A549 (cell line): ENCODE measurements at regions of chr22 and their contacts with region 1.

Region 1: DNA sequence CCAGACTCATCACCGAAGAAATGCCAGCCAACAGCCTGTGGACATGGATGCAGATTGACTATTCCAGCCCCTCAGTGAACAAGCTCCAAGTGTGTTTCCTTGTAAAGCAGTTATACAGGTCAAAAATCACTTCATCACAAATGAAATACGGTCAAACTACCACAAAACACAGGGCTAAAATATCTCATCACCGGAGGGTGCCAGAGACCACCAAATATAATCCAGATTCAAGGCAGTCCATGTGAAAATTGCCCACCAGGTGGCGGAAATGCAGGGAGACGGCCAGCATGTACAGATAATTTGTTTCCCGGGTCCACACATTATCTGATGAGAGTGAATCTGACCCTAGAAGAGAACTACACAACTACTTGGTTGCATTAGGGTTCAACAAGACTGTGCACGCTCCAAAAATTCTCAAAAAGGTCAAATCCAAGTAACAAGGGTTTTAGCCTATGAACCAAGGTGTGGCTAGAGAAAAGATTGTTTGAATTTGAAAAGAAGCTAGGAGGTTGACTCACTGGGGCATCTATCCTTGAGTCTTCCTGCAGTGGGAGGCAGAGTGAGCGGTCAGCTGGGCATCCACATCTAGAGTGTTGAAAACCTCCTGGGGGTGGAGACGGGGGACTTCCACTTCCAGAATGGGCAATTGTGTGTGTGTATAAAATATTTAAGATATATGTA is 71.7 kb downstream of the IGLL5 start:
- DNase-seq: peak; percentile 40 to 66
- ATAC-seq: peak; percentile 71 to 84
- H3K4me3 ChIP-seq: no peak overlapping the region
- H3K27ac ChIP-seq: no peak overlapping the region
- H3K4me1 ChIP-seq: no peaks in the 10 kb centered on the region
- CTCF ChIP-seq: peak; percentile 93
- EP300 ChIP-seq: no peak
- POLR2A ChIP-seq: no peak
- RAD21 ChIP-seq: peak; percentile 90

Region 2: GRCh38 chr22:22431271-22432220 is 527.7 kb before region 1 on chr22:
- CTCF ChIA-PET with region 1: interaction called, 22 read pairs
- POLR2A ChIA-PET with region 1: no interaction called
- DNase-seq: peak; percentile 48 to 53
- ATAC-seq: peak; percentile 97 to 99
- H3K4me3 ChIP-seq: no peak overlapping the region
- H3K27ac ChIP-seq: no peak overlapping the region
- H3K4me1 ChIP-seq: no peaks in the 10 kb centered on the region
- CTCF ChIP-seq: peak; percentile 55
- EP300 ChIP-seq: no peak
- POLR2A ChIP-seq: no peak
- RAD21 ChIP-seq: peak; percentile 45 to 50

Region 3: DNA sequence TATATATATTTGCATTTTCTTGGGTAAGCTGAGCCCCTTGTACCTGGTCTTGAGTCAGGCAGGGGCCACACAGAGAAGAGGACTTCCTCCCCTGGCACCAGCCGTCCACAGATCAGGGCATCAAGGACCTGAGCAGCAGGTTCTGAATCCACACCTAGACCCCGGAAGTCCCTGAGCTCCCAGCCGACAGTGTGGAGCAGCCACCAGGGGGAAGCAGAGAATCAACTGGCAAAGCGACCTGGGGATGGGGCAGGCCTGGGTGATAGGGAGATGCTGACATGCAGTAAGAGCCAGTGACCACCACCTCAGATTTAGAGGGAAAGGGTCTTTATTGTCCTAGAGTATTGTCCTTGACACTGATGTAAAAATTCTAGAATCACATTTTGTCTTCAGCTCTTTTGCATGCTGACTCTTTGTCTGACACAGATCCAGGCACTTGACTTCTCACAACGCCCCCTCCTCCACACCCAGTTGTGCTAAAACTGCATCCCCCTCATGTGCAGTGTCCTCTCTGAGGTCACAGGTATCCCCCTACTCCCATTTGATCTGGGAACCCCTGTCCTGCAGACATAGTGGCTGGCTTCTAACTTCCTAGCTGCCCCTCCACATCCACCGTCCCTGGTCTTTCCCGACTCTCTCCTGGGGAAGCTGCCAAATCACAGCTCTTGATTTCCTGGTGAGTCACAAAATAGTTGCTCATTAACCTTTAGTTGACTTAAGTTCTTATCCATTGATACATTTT is 205.6 kb before region 1 on chr22:
- CTCF ChIA-PET with region 1: interaction called, 14 read pairs
- POLR2A ChIA-PET with region 1: no interaction called
- DNase-seq: peak; percentile 54 to 74
- ATAC-seq: peak; percentile 89 to 97
- H3K4me3 ChIP-seq: no peak overlapping the region
- H3K27ac ChIP-seq: 0 out of 6 replicates have a peak overlapping the region, but pooled peaks of 1 of the 2 experiments have one; percentile 39
- H3K4me1 ChIP-seq: peaks cover 5% of the 10 kb centered on the region; the same call in 1 of the 3 replicates
- CTCF ChIP-seq: peak; percentile 43; the same call in 2 of the 3 replicates
- EP300 ChIP-seq: no peak
- POLR2A ChIP-seq: no peak
- RAD21 ChIP-seq: peak; percentile 36 to 46; a peak in 3 of 5 replicates

Region 4: DNA sequence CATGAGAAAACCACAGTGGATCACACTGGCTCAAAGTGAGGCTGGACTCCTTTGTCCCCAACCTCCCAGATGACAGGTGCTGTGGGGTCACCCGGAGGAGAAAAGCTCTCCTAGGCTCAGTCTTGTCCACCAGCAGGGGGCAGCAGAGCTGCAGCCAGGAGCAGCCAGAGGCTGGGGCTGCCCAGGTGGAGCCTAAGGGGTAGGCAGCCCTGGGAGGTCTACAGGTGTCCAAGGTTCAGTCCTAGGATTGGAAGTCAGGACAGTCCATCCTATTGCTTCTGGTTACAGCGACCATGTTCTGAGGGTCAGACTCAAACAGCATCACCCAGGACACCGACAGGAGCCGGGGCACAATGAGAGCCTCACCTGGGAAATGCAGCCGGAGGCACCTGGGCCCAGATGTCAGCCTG is 149.3 kb before region 1 on chr22:
- CTCF ChIA-PET with region 1: interaction called, 13 read pairs
- POLR2A ChIA-PET with region 1: no interaction called
- DNase-seq: peak; percentile 18 to 46
- ATAC-seq: peak; percentile 85 to 93; a peak in 5 of 6 replicates
- H3K4me3 ChIP-seq: no peak overlapping the region
- H3K27ac ChIP-seq: no peak overlapping the region
- H3K4me1 ChIP-seq: no peaks in the 10 kb centered on the region
- CTCF ChIP-seq: peak; percentile 58
- EP300 ChIP-seq: no peak
- POLR2A ChIP-seq: no peak
- RAD21 ChIP-seq: peak; percentile 45 to 51

Region 5: GRCh38 chr22:22942511-22943329 is 16.6 kb before region 1 on chr22:
- CTCF ChIA-PET with region 1: interaction called, 28 read pairs
- POLR2A ChIA-PET with region 1: no interaction called
- DNase-seq: peak; percentile 35 to 65
- ATAC-seq: peak; percentile 74 to 94
- H3K4me3 ChIP-seq: no peak overlapping the region
- H3K27ac ChIP-seq: no peak overlapping the region
- H3K4me1 ChIP-seq: no peaks in the 10 kb centered on the region
- CTCF ChIP-seq: peak; percentile 44
- EP300 ChIP-seq: no peak
- POLR2A ChIP-seq: no peak
- RAD21 ChIP-seq: peak in 1 of 2 experiments; percentile 43; a peak in 2 of 5 replicates

Region 6: DNA sequence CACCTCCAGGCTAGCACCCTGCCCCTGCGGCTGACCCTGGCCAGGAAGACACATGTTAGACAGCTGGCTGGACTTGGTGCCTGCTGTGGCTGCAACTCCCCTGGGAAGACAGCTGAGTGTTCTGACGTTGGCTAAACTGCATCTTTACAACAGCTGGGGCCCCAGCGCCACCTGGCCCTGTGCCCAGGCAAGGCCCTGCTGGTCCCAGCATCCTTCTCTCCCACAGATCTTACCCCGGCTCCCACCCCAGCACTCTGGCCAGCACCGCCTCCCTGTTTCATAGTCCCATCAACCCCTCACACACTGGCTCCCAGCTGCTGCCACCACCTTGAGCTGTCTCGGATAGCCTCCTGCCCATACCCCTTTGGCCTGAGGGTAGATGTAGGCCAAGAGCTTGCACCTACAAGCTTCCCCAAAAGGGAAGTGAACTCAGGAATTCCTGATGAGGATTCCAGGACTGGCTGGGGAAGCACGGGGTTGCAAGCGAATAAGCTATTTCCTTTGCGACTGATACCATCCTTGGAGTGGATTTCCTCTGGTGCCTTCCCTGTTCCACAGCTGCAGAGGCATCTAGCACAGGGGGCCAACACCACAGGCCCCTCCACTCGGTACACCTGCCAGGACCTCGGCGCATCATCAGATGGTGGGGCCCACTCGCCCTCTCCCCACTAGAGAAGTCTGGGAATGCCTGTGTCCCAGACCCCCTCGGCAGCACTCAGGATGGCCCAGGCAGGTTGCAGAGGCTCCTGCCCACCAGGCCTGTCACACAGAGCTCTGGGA is 154.0 kb after region 1 on chr22:
- CTCF ChIA-PET with region 1: interaction called, 144 read pairs
- POLR2A ChIA-PET with region 1: no interaction called
- DNase-seq: no peak
- ATAC-seq: no peak
- H3K4me3 ChIP-seq: no peak overlapping the region
- H3K27ac ChIP-seq: no peak overlapping the region
- H3K4me1 ChIP-seq: no peaks in the 10 kb centered on the region
- CTCF ChIP-seq: no peak
- EP300 ChIP-seq: no peak
- POLR2A ChIP-seq: no peak
- RAD21 ChIP-seq: no peak

Region 7: GRCh38 chr22:23137905-23138561 is 178.7 kb after region 1 on chr22:
- CTCF ChIA-PET with region 1: interaction called, 314 read pairs
- POLR2A ChIA-PET with region 1: no interaction called
- DNase-seq: no peak
- ATAC-seq: no peak
- H3K4me3 ChIP-seq: no peak overlapping the region
- H3K27ac ChIP-seq: no peak overlapping the region
- H3K4me1 ChIP-seq: peaks cover 8% of the 10 kb centered on the region; the same call in 1 of the 3 replicates
- CTCF ChIP-seq: no peak
- EP300 ChIP-seq: no peak
- POLR2A ChIP-seq: no peak
- RAD21 ChIP-seq: no peak

Region 8: DNA sequence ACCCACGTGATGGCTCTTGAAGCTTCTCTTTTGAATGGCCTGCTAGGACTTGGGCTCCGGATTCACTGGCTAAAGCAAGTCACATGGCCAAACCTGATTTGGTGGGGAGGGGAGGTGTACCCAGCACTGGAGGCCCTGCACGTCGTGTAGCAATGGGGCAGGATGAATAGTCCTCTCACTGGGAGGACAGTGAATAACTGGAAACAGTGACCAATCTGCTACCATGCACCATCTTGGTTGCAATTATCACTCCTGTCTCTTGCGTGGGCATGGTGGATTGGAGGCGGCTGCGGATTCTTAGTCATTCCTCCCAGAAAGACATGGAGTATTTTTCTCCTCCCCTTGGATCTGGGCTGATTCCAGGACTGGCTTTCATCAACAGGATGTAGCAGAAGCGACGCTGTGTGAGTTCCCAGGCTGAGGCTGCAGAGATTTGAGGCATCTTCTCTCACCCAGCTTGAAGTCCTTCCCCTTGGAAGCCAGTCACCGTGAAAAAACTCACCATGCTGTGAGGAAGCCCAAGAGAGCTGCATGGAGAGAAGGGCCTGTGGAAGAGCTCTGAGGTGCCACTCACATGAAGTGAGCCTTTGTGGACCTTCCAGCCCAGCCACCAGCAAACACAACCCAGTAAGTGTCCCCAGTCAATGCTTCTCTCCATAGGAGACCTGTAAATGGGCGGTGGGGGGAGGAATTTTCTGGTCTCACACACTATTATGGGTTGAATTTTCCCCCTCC is 550.5 kb after region 1 on chr22:
- CTCF ChIA-PET with region 1: no interaction called
- POLR2A ChIA-PET with region 1: no interaction called
- DNase-seq: no peak
- ATAC-seq: no peak
- H3K4me3 ChIP-seq: no peak overlapping the region
- H3K27ac ChIP-seq: peak overlapping the region in 1 of 2 experiments; percentile 9; a peak in 1 of 6 replicates
- H3K4me1 ChIP-seq: no peaks in the 10 kb centered on the region
- CTCF ChIP-seq: no peak
- EP300 ChIP-seq: no peak
- POLR2A ChIP-seq: no peak
- RAD21 ChIP-seq: no peak